Activated naive CD4-positive, alpha-beta T cell treated with anti-CD3 and anti-CD28 coated beads, Interleukin-2, amount 10 ng/mL, durations not matched to agents 7 days and 5 days (primary cell): ENCODE measurements at regions of chr3 and their contacts with region 1.

Region 1: GRCh38 chr3:138915503-138916498 is 31.1 kb downstream of the FOXL2 start:
- DNase-seq: peak; percentile 85
- H3K4me3 Mint-ChIP-seq: peak overlapping the region; percentile 80
- H3K27ac Mint-ChIP-seq: peak overlapping the region; percentile 76
- H3K4me1 Mint-ChIP-seq: peaks cover 7% of the 10 kb centered on the region
- H3K27me3 Mint-ChIP-seq: peaks cover 36% of the 10 kb centered on the region

Region 2: GRCh38 chr3:138479438-138479863 is 436.4 kb before region 1 on chr3:
- CTCF ChIA-PET with region 1: interaction called, 23 read pairs
- DNase-seq: peak; percentile 66
- H3K4me3 Mint-ChIP-seq: no peak overlapping the region
- H3K27ac Mint-ChIP-seq: no peak overlapping the region
- H3K4me1 Mint-ChIP-seq: no peaks in the 10 kb centered on the region
- H3K27me3 Mint-ChIP-seq: peaks cover 4% of the 10 kb centered on the region

Region 3: DNA sequence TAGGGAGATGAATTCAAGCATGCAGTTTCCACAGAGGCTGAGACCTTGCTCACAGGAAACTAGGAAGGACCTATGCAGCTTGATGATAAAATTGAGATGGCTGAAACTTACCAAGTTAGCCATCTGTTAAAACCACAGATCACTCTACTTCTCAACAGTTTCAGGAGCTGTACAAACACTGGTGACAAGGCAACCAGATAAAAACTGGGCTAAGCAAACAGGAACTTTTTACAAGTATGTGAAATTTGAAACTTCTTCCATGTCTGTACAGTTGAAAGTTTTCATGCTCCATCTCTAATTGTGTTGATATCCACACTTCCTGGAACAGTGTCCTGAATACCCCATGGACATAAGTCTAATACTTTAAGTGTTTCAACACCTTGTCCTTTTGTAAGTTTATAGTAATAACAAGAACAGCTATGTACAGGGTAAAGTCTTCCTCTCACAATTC is 229.0 kb before region 1 on chr3:
- CTCF ChIA-PET with region 1: interaction called, 45 read pairs
- DNase-seq: no peak
- H3K4me3 Mint-ChIP-seq: no peak overlapping the region
- H3K27ac Mint-ChIP-seq: no peak overlapping the region
- H3K4me1 Mint-ChIP-seq: peaks cover 6% of the 10 kb centered on the region
- H3K27me3 Mint-ChIP-seq: no peaks in the 10 kb centered on the region

Region 4: DNA sequence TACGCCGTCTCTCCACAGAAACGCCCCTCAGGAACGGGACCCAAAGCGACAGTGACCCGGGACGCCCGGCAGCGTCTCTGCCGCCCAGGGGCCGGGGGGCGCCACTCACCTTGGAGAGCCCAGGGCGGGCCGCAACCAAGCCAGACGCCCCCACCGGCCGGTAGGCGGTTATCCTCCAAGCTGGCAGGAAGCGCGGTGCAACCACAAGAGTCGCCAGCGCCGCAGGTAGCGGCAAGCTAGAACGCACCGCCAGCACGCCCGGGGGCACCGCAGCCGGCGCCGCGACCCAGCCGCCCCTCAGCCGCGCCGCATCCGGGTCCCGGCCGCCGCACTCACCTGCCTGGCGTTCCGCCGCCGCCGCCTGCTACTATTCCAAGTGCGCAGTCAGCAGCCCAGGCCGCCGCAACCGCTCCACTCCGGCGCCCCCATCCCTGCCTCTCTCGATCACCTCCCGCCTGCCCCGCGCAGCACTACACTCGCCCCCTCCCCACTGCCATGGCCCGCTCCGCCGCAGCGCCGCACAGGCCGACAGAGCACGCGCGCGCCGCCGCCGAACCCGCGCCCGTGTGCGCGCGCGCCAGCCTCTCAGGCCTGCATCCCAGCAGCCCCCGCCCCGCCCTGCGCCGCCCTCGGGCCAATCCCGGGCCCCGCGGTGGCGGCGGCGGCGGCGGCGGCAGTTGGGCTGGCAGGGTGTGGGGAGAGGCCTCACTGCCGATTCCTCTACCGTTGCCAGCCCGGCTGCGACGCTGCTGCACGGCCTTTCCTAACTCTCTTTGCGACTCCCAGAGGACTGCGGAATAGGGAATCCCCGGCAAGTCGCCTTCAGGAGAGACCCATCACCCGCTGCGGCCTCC is 81.2 kb before region 1 on chr3 and contains the start of gene PIK3CB:
- CTCF ChIA-PET with region 1: interaction called, 15 read pairs
- DNase-seq: peak; percentile 88
- H3K4me3 Mint-ChIP-seq: peak within 1 kb of the TSS; percentile 86
- H3K27ac Mint-ChIP-seq: peak within 1 kb of the TSS; percentile 87
- H3K4me1 Mint-ChIP-seq: peaks cover 23% of the 10 kb centered on the region
- H3K27me3 Mint-ChIP-seq: no peaks in the 10 kb centered on the region

Region 5: GRCh38 chr3:138898301-138898700 is 17.5 kb before region 1 on chr3:
- CTCF ChIA-PET with region 1: interaction called, 26 read pairs
- DNase-seq: no peak
- H3K4me3 Mint-ChIP-seq: no peak overlapping the region
- H3K27ac Mint-ChIP-seq: no peak overlapping the region
- H3K4me1 Mint-ChIP-seq: no peaks in the 10 kb centered on the region
- H3K27me3 Mint-ChIP-seq: peaks cover 6% of the 10 kb centered on the region

Region 6: GRCh38 chr3:138995706-138996105 is 79.9 kb after region 1 on chr3:
- CTCF ChIA-PET with region 1: no interaction called
- DNase-seq: no peak
- H3K4me3 Mint-ChIP-seq: no peak overlapping the region
- H3K27ac Mint-ChIP-seq: no peak overlapping the region
- H3K4me1 Mint-ChIP-seq: no peaks in the 10 kb centered on the region
- H3K27me3 Mint-ChIP-seq: peaks cover 11% of the 10 kb centered on the region